ENCODE measurements at regions of chr10 and their contacts with region 1.

Region 1: GRCh38 chr10:118911361-118911760 is 118.2 kb upstream of the NANOS1 start:
- DNase-seq: no peak

Region 2: GRCh38 chr10:118818621-118819221 is 92.6 kb before region 1 on chr10:
- intact Hi-C with region 1: no loop called
- DNase-seq: no peak

Region 3: GRCh38 chr10:118870467-118871243 is 40.7 kb before region 1 on chr10:
- intact Hi-C with region 1: loop called (anchors 5 kb)
- DNase-seq: no peak

Region 4: DNA sequence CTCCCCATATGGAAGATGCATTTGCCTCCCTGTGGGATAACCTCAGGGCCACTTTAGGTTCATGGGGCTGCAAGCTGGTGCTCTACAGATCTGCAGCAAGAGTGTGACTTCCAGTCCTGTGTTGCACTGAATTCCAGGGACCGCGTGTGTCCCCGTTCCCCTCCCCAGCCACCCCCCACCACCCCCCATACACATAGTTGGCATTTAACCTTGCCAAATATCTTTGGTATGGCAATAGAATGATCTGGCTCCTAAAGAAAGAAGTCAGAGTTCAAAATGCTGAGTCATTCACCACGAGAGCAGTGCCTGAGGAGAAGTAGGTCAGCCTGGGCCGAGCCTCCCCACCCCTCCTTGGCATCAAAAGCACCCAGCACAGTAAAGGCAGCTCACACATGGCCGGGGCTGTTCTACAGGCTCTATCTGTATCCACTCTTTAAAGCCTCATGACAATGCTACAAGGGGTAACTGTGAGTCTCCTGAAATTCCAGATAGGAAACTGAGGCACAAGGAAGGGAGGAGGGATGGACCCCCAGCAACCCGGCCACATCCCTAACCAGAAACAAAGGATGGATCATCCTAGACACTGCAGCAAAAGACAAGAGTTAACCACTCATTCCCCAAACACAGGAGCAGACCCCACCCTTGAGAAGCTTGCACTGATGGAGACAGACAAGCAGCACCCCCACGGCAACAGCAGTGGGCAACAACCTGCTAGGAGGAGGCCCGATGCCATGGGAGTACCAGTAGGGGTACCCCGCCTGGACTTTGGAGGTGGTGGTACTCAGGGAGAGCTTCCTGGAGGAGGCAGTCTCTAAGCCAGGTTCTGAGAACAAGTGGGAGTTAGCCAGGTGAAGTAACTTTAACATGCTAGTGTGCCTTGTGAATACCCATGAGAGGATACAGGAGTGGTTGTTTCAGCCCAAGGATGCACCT is 47.9 kb after region 1 on chr10:
- intact Hi-C with region 1: loop called (anchors 5 kb)
- DNase-seq: peak; percentile 78

Measured in cardiac septum (tissue), 1 donor.